H1 (cell line): ENCODE measurements at regions of chr9 and their contacts with region 1.

Region 1: DNA sequence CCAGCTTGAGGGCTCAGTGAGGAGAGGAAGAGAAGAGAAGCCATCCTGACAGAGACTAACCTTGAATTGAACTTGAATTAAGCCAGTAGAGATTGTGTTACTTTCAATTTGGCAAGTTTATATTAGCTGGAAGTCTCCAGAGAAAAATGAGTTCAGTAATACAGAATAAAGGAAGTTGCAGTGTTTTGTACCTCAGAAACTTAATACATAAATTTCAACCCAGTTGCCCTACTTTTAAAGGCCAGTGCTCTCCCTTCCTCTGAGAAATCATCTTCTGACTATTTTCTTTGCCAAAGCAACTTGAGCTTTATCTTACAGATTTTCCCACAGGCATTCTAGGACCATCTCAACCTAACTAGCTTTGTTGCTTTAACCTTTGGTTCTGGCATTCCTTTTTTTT is 231.0 kb upstream of the GAS1 start:
- DNase-seq: no peak
- H3K4me3 ChIP-seq: no peak overlapping the region
- H3K27ac ChIP-seq: no peak overlapping the region
- H3K4me1 ChIP-seq: no peaks in the 10 kb centered on the region
- H3K27me3 ChIP-seq: no peaks in the 10 kb centered on the region
- CTCF ChIP-seq: no peak
- EP300 ChIP-seq: no peak
- POLR2A ChIP-seq: no peak
- RAD21 ChIP-seq: no peak

Region 2: DNA sequence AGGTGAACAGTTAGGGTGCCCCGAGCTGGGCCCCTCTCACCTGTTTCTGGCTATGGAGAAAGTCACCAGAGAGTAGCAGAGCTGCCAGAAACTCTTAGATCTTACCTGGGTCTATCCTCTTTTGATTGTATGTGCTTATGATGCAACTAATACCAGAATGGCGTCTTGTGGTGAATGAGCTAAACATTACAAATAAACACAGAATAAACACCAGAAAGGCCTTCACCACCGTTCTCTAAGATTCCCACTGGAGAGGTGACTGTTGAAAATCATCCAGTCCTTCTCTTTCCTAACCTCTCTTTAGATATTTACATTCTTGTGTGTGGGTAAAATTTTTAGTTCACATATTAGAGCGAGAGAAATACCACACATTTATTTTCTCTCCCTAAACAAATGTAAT is 10.7 kb after region 1 on chr9:
- CTCF ChIA-PET with region 1: interaction called, 11 read pairs
- POLR2A ChIA-PET with region 1: no interaction called
- DNase-seq: no peak
- H3K4me3 ChIP-seq: no peak overlapping the region
- H3K27ac ChIP-seq: no peak overlapping the region
- H3K4me1 ChIP-seq: peaks cover 0 to 5% (median under 1%) of the 10 kb centered on the region in 4 experiments; a peak in 1 of 7 replicates
- H3K27me3 ChIP-seq: no peaks in the 10 kb centered on the region
- CTCF ChIP-seq: no peak
- EP300 ChIP-seq: no peak
- POLR2A ChIP-seq: no peak
- RAD21 ChIP-seq: no peak